Caco-2 (cell line): ENCODE measurements at regions of chr14 and their contacts with region 1.

Region 1: DNA sequence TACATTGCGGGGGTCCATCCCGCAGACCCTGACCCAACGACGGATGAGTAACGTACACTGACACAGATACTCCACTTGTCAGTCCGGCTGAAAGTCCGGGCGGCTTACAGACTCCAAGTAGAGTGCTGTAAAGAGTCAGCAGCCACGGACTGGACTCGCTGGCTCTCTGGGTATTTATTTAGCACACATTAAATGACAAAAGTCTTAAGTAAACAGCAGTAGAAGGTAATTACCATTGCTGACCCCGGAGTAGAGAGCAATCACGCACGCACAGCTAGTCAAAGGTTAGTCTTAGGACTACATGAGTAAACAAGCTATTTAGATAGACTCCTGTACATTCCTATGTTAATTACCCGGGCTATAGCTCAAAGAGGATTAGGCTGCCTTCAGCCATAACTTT is 780.9 kb downstream of the RPS29 start:
- DNase-seq: peak; percentile 74 to 87
- H3K4me3 ChIP-seq: no peak overlapping the region
- H3K4me3 Mint-ChIP-seq: peak overlapping the region; percentile 42
- H3K27ac Mint-ChIP-seq: peak overlapping the region; percentile 76
- H3K4me1 ChIP-seq: peaks cover 10% of the 10 kb centered on the region
- H3K4me1 Mint-ChIP-seq: peaks cover 16% of the 10 kb centered on the region
- H3K27me3 ChIP-seq: no peaks in the 10 kb centered on the region
- H3K27me3 Mint-ChIP-seq: no peaks in the 10 kb centered on the region
- CTCF ChIP-seq: no peak

Region 2: DNA sequence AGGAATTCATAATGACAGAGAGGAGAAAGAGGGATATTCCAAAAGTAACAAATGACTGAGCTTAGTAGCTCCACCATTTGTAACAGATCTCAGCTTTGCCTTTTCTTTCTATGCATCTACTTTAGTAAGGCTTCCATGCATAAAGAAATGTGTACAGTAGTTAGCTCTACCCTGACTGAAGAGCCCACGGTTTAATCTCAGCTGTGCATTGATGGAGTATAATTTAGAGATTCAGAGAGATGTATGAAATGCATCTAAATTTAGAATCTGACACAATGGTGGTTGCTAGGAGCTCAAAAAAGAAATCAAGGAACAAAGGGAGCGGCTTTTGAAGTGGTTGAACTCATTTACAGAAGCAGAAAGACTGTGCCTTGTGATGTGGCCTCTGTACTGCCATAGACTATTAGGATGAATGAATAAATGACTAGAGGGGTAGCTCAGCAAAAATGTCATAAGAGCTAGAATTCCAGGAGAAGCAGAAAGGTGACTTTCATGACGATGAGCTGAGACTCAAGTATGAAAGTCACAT is 57.7 kb before region 1 on chr14:
- CTCF ChIA-PET with region 1: no interaction called
- POLR2A ChIA-PET with region 1: no interaction called
- intact Hi-C with region 1: loop called (anchors 1 kb)
- DNase-seq: no peak
- H3K4me3 ChIP-seq: no peak overlapping the region
- H3K4me3 Mint-ChIP-seq: no peak overlapping the region
- H3K27ac Mint-ChIP-seq: peak overlapping the region; percentile 48
- H3K4me1 ChIP-seq: peaks cover 19% of the 10 kb centered on the region
- H3K4me1 Mint-ChIP-seq: peaks cover 27% of the 10 kb centered on the region
- H3K27me3 ChIP-seq: no peaks in the 10 kb centered on the region
- H3K27me3 Mint-ChIP-seq: no peaks in the 10 kb centered on the region
- CTCF ChIP-seq: no peak